ENCODE measurements at regions of chr17 and their contacts with region 1.

Region 1: DNA sequence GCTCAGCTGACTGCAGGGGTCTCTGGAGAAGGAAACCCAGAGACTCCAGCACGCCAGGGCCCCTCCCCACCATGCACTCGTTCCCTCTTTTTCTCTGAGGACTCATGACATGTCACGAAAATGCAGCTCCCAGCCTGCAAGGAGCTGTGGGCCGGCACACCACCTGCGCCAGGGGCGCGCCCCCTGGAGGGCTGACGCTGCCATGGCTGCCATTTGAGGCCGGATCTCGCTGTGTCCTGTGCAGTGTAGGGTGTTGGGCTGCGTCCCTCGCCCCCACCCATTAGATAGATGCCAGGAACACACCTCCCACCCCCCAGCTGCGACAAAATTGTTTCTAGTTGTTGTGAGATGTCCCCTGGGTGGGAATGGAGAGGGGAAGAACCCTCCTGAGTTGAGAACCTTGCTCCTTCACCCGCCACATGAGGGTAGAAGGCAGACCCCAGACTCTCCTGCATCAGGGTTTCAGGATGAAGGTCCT is 8.2 kb downstream of the SYNGR2 start:
- DNase-seq: peak; percentile 90
- H3K4me3 ChIP-seq: peak overlapping the region in 1 of 2 experiments; percentile 25; a peak in 1 of 4 replicates
- H3K27ac ChIP-seq: no peak overlapping the region
- H3K4me1 ChIP-seq: peaks cover 5 to 8% of the 10 kb centered on the region in 2 experiments; a peak in 2 of 4 replicates
- H3K27me3 ChIP-seq: no peaks in the 10 kb centered on the region
- CTCF ChIP-seq: peak; percentile 93
- EP300 ChIP-seq: no peak
- RAD21 ChIP-seq: peak; percentile 74

Region 2: DNA sequence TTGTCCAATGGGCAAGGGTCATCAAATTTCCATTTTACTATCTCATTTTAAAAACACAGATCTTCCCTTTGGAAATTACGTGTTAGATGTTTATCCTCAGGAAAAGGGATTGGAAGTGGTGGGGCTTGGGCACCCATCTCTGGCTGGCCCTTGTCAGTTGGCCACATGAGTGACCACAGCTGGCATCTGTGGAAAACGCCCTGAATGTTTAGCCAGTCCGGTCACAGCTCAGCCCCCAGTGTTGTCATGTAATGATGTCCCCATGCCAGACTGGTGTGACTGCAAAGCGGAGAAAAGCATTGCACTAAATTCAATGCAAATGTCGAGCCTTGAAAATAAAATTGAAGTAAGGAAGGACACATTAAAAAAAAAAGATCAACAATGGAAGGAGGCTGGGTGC is 101.0 kb before region 1 on chr17:
- CTCF ChIA-PET with region 1: no interaction called
- POLR2A ChIA-PET with region 1: no interaction called
- DNase-seq: no peak
- H3K4me3 ChIP-seq: no peak overlapping the region
- H3K27ac ChIP-seq: no peak overlapping the region
- H3K4me1 ChIP-seq: no peaks in the 10 kb centered on the region
- H3K27me3 ChIP-seq: no peaks in the 10 kb centered on the region
- CTCF ChIP-seq: no peak
- EP300 ChIP-seq: no peak
- RAD21 ChIP-seq: no peak

Region 3: DNA sequence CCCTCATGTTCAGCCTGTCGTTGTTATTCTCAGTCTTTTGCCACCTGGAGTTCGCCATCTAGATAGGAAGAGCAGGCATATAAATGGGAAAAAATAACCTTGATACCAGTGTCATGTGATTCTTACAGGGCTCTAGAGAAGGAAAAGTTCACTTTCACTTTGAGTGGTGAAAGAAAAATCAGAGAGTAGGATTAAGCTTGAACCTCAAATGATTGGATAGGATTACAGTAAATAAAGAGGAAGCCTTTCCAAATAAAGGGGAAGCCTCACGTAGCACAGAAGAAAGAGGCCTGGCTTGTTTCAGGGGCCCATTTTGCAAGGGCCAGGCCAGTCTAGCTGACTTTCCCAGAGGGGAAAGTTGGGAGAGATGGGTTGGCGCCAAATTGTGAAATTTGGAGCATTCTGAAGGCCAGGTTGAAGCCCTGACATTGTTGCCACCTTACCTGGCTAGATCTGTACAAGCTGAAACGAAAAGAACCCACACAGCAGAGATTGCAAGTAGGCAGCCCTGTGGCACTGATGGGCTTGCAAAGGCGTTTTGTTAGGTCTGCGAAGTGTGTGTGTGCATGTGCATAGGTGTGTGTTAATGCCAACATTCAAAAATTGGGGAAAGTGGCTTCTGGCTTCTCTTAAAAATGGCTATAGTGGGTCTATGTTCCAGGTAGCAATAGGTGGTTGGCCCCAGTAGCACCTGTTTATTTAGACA is 86.9 kb before region 1 on chr17:
- CTCF ChIA-PET with region 1: interaction called, 12 read pairs
- POLR2A ChIA-PET with region 1: interaction called, 5 read pairs
- DNase-seq: no peak
- H3K4me3 ChIP-seq: no peak overlapping the region
- H3K27ac ChIP-seq: no peak overlapping the region
- H3K4me1 ChIP-seq: peaks cover 0 to 3% of the 10 kb centered on the region in 2 experiments; a peak in 1 of 4 replicates
- H3K27me3 ChIP-seq: no peaks in the 10 kb centered on the region
- CTCF ChIP-seq: no peak
- EP300 ChIP-seq: no peak
- RAD21 ChIP-seq: no peak

Region 4: DNA sequence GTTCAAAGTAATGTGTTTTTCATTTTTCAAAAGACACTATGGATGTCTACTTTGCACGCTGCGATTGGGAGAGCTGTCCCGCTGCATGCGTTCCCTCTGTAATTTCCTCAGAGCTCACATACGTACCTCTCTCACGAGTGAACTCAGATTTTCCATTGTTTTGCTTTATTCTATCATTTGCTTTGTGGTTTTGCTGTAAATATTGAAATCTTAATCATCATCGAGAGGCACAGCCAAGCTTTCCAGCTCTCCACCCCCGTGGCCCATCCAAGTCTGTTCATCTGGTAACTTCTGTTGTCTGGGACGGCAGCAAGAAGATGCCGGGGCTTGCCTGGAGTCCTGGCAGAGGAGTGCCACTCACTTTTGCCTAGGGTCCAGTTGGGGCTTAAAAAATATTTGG is 69.1 kb before region 1 on chr17:
- CTCF ChIA-PET with region 1: interaction called, 131 read pairs
- POLR2A ChIA-PET with region 1: no interaction called
- DNase-seq: no peak
- H3K4me3 ChIP-seq: no peak overlapping the region
- H3K27ac ChIP-seq: no peak overlapping the region
- H3K4me1 ChIP-seq: peaks cover 0 to 3% of the 10 kb centered on the region in 2 experiments; a peak in 1 of 4 replicates
- H3K27me3 ChIP-seq: no peaks in the 10 kb centered on the region
- CTCF ChIP-seq: no peak
- EP300 ChIP-seq: no peak
- RAD21 ChIP-seq: no peak

Region 5: GRCh38 chr17:78120971-78121800 is 55.4 kb before region 1 on chr17:
- CTCF ChIA-PET with region 1: interaction called, 131 read pairs
- POLR2A ChIA-PET with region 1: interaction called, 5 read pairs
- DNase-seq: no peak
- H3K4me3 ChIP-seq: no peak overlapping the region
- H3K27ac ChIP-seq: no peak overlapping the region
- H3K4me1 ChIP-seq: peaks cover 0 to 23% of the 10 kb centered on the region in 2 experiments; a peak in 1 of 4 replicates
- H3K27me3 ChIP-seq: no peaks in the 10 kb centered on the region
- CTCF ChIP-seq: no peak
- EP300 ChIP-seq: no peak
- RAD21 ChIP-seq: no peak

Region 6: DNA sequence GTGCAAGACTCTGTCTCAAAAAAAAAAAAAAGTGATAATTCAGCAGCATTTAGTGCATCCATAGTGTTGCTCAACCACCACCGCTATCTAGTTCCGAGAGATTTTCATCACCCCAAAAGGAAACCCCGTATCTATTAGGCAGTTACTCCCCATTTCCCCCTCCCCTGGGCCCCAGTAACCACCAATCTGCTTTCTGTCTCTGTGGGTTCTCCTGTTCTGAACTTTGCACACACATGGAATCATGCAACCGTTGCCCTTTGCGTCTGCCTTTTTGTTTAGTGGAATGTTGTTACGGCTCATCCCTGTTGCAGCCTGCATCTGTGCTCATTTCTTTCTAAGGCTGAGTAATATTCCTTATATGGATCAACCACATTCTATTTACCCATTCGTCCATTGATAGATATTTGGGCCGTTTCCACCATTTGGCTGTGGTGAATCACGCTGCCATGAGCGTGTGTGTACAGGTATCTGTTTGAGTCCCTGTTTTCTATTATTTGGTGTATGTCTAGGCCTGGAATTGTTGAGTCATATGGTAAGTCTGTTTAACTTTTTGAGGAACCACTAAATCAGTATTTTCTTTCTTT is 16.9 kb before region 1 on chr17:
- CTCF ChIA-PET with region 1: interaction called, 14 read pairs
- POLR2A ChIA-PET with region 1: interaction called, 5 read pairs
- DNase-seq: no peak
- H3K4me3 ChIP-seq: no peak overlapping the region
- H3K27ac ChIP-seq: no peak overlapping the region
- H3K4me1 ChIP-seq: peaks cover 0 to 5% of the 10 kb centered on the region in 2 experiments; a peak in 1 of 4 replicates
- H3K27me3 ChIP-seq: no peaks in the 10 kb centered on the region
- CTCF ChIP-seq: no peak
- EP300 ChIP-seq: no peak
- RAD21 ChIP-seq: no peak

Region 7: DNA sequence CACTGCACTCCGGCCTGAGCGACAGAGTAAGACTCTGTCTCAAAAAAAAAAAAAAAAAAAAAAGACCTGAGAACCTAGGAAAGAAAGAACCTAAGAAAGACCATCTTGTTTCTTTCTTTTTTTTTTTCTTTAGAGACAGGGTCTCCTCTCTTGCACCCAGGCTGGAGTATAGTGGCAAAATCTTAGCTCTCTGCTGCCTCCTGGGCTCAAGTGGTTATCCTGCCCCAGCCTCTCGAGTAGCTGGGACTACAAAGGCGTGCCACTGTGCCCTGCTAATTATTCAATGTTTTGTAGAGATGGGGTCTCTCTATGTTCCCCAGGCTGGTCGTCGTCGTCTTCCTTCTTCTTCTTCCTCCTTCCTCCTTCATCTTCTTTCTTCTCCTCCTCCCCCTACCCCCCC is 29.7 kb after region 1 on chr17:
- CTCF ChIA-PET with region 1: interaction called, 12 read pairs
- POLR2A ChIA-PET with region 1: interaction called, 3 read pairs
- DNase-seq: no peak
- H3K4me3 ChIP-seq: no peak overlapping the region
- H3K27ac ChIP-seq: no peak overlapping the region
- H3K4me1 ChIP-seq: no peaks in the 10 kb centered on the region; a peak in 1 of 4 replicates
- H3K27me3 ChIP-seq: no peaks in the 10 kb centered on the region
- CTCF ChIP-seq: peak; percentile 16; the same call in 1 of the 2 replicates
- EP300 ChIP-seq: no peak
- RAD21 ChIP-seq: no peak

Region 8: GRCh38 chr17:78341559-78342448 is 165.2 kb after region 1 on chr17:
- CTCF ChIA-PET with region 1: no interaction called
- POLR2A ChIA-PET with region 1: no interaction called
- DNase-seq: peak; percentile 97
- H3K4me3 ChIP-seq: peak overlapping the region; percentile 31 to 36; a peak in 3 of 4 replicates
- H3K27ac ChIP-seq: peak overlapping the region; percentile 72 to 95
- H3K4me1 ChIP-seq: peaks cover 28 to 39% of the 10 kb centered on the region in 2 experiments; a peak in 3 of 4 replicates
- H3K27me3 ChIP-seq: no peaks in the 10 kb centered on the region
- CTCF ChIP-seq: no peak
- EP300 ChIP-seq: peak in 1 of 2 experiments; percentile 58; a peak in 1 of 4 replicates
- RAD21 ChIP-seq: no peak; the same call in 1 of the 2 replicates